Mammary epithelial cell (primary cell): ENCODE measurements at regions of chr21 and their contacts with region 1.

Region 1: GRCh38 chr21:35138665-35139381 is 89.7 kb upstream of the RUNX1 start:
- DNase-seq: peak; percentile 100
- H3K4me3 ChIP-seq: no peak overlapping the region
- H3K27ac ChIP-seq: peak overlapping the region; percentile 99
- H3K4me1 ChIP-seq: peaks cover 45% of the 10 kb centered on the region
- H3K27me3 ChIP-seq: no peaks in the 10 kb centered on the region
- CTCF ChIP-seq: peak; percentile 26 to 51

Region 2: DNA sequence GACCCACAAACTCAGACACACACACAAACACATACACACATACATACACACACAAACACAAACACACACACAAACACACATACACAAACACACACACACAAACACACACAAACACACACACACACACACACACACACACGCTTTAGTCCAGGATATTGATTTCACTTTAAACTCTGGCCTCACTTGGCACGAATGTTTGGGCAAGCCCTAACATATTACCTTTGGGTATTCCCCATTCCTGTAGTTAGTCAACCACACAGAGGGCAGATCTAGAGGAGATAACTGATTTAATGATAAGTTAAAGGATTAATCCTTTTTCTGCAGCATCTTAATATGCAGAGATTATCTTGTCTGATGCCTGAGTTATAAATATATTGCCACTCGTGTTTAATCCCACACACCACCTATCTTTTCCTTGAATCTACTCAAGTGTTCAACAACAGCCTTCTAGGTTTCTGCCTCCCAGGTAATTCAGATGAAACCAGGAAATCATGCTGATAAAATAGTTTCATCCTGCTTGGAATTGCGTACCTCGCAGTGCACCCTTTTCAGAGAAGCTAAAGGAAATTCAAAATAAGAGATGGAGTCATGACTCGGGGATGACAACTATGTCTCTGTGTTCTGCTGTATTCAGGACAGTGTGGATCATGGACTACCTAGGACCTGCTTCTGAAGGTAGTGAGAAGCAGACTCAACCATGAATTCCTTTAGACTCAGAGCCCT is 75.2 kb before region 1 on chr21:
- CTCF ChIA-PET with region 1: no interaction called
- dilution Hi-C with region 1: no loop called
- in situ Hi-C with region 1: no loop called
- intact Hi-C with region 1: loop called (anchors 1 kb)
- DNase-seq: peak; percentile 95
- H3K4me3 ChIP-seq: no peak overlapping the region
- H3K27ac ChIP-seq: peak overlapping the region; percentile 76
- H3K4me1 ChIP-seq: peaks cover 19% of the 10 kb centered on the region
- H3K27me3 ChIP-seq: no peaks in the 10 kb centered on the region
- CTCF ChIP-seq: no peak

Region 3: GRCh38 chr21:35149698-35150097 is 10.9 kb after region 1 on chr21:
- CTCF ChIA-PET with region 1: no interaction called
- dilution Hi-C with region 1: no loop called
- in situ Hi-C with region 1: no loop called
- intact Hi-C with region 1: loop called (anchors 1 kb)
- DNase-seq: peak; percentile 84
- H3K4me3 ChIP-seq: no peak overlapping the region
- H3K27ac ChIP-seq: peak overlapping the region; percentile 99
- H3K4me1 ChIP-seq: peaks cover 69% of the 10 kb centered on the region
- H3K27me3 ChIP-seq: no peaks in the 10 kb centered on the region
- CTCF ChIP-seq: no peak

Region 4: DNA sequence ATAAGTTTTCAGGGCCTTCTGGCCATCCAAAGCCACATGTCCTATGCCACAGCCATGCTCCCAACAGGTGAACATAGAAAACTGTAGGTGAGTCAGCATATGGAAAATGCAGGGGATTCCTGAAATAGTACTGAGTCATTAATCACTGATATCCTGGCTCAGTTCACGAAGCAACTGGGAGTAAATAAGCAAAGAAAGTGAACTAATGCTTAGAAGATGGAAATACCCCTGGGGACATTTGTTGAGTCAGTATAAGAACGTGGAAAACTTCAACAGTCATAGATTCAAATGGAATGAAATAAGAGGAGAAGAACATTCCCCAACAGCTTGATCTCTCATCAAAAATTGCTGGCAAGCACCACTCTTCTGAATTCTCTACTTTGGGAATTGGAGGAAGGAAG is 59.2 kb after region 1 on chr21:
- CTCF ChIA-PET with region 1: no interaction called
- dilution Hi-C with region 1: no loop called
- in situ Hi-C with region 1: no loop called
- intact Hi-C with region 1: loop called (anchors 1 kb)
- DNase-seq: peak; percentile 99
- H3K4me3 ChIP-seq: no peak overlapping the region
- H3K27ac ChIP-seq: peak overlapping the region; percentile 96
- H3K4me1 ChIP-seq: peaks cover 23% of the 10 kb centered on the region
- H3K27me3 ChIP-seq: no peaks in the 10 kb centered on the region
- CTCF ChIP-seq: no peak

Region 5: DNA sequence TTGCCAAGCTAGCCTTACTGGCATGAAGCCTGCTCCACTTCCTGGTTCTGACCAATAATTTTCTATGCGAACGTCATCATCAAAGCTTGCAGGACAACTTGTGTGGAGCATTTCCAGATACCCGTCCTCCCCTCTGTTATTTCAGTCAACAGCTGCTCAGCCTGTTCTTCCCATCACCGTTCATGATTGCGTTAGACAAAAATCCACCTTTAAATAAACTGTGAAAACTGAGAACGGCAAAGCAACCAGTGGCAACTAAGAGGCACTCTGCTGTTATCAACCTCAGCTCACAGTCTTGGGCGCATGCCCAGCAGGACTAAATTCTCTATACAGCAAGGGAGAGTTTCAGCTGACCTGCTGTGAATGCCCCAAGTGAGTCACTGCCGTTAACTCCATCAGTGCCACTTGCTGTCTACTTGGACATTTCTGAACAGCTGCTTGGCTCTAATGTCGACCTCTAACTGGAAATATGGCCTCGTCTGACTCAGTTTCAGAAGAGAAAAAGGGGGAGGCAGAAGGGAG is 117.7 kb after region 1 on chr21:
- CTCF ChIA-PET with region 1: no interaction called
- dilution Hi-C with region 1: no loop called
- in situ Hi-C with region 1: no loop called
- intact Hi-C with region 1: loop called (anchors 1 kb)
- DNase-seq: peak; percentile 99
- H3K4me3 ChIP-seq: peak overlapping the region; percentile 3 to 31 (median 7)
- H3K27ac ChIP-seq: peak overlapping the region; percentile 98
- H3K4me1 ChIP-seq: peaks cover 17% of the 10 kb centered on the region
- H3K27me3 ChIP-seq: no peaks in the 10 kb centered on the region
- CTCF ChIP-seq: peak in 1 of 2 donors; percentile 16

Region 6: DNA sequence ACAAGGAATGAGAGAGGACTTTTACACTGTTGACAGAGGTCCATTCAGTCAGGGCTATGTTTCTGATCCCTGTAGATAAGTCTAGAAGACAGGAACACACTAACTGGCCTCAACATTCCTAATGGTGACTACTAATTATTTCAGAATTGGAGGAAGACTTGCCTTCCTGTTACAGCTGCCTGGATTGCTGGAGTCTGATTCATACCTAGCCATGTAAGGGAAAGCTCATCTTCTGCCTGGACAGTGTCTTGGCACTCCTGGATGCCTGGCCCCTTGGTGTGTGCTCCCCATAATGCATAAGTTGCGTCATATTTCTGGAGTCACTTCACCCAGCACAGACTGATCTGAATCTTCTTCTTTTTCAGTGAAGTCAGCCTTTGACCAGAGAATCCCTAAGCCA is 236.3 kb after region 1 on chr21:
- CTCF ChIA-PET with region 1: no interaction called
- dilution Hi-C with region 1: no loop called
- in situ Hi-C with region 1: no loop called
- intact Hi-C with region 1: loop called (anchors 2 kb)
- DNase-seq: peak; percentile 77
- H3K4me3 ChIP-seq: no peak overlapping the region
- H3K27ac ChIP-seq: peak overlapping the region; percentile 42
- H3K4me1 ChIP-seq: peaks cover 37% of the 10 kb centered on the region
- H3K27me3 ChIP-seq: no peaks in the 10 kb centered on the region
- CTCF ChIP-seq: no peak